Sigmoid colon (tissue), 7 donors: ENCODE measurements at regions of chr11 and their contacts with region 1.

Region 1: DNA sequence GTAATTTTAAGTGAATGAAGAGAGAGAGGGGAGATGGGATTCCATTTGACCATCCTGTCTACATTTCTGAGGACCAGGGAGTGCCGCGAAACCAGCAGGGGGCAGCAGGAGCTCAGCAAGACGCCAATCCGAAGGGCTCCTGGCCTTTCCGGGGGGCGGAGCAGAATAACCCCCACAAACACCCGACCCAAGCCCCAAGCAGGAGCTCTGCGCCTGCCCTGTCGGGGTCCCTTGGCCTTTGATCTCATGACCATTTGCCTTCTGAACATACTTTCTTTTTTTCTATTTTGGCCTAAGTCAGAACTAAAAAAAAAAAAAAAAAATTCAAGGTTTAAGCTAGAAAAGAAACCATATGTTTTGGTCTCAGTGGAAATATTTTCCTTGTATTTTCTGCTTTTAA is 21.9 kb upstream of the SCN2B start:
- DNase-seq: peak; percentile 87
- H3K4me3 ChIP-seq: peak overlapping the region in 1 of 4 donors; percentile 4
- H3K27ac ChIP-seq: no peak overlapping the region
- H3K4me1 ChIP-seq: peaks cover 0 to 28% (median 20%) of the 10 kb centered on the region in 4 donors
- H3K27me3 ChIP-seq: no peaks in the 10 kb centered on the region
- CTCF ChIP-seq: peak; percentile 57 to 84 (median 80)
- EP300 ChIP-seq: no peak
- POLR2A ChIP-seq: no peak

Region 2: GRCh38 chr11:118359295-118359958 is 161.1 kb after region 1 on chr11 and contains the start of gene UBE4A:
- intact Hi-C with region 1: loop called (anchors 2 kb)
- DNase-seq: peak; percentile 97
- H3K4me3 ChIP-seq: peak within 1 kb of the TSS; percentile 48 to 81 (median 55)
- H3K27ac ChIP-seq: peak within 1 kb of the TSS; percentile 55 to 74 (median 64)
- H3K4me1 ChIP-seq: peaks cover 0 to 24% (median 13%) of the 10 kb centered on the region in 4 donors
- H3K27me3 ChIP-seq: no peaks in the 10 kb centered on the region
- CTCF ChIP-seq: no peak
- EP300 ChIP-seq: peak in 1 of 4 donors; percentile 29
- POLR2A ChIP-seq: peak in 1 of 2 donors; percentile 48
- total RNA-seq, gene UBE4A: 33.8 to 37.4 (median 36.4) TPM